Activated CD8-positive, alpha-beta memory T cell treated with anti-CD3 and anti-CD28 coated beads, Interleukin-2, amount 10 ng/mL, durations not matched to agents 7 days and 5 days (primary cell): ENCODE measurements at regions of chr19 and their contacts with region 1.

Region 1: GRCh38 chr19:50368649-50369570 is 3.5 kb upstream of the NAPSA start:
- DNase-seq: peak; percentile 90
- ATAC-seq: peak; percentile 82
- H3K4me3 Mint-ChIP-seq: peak overlapping the region; percentile 88
- H3K27ac Mint-ChIP-seq: peak overlapping the region; percentile 88
- H3K4me1 Mint-ChIP-seq: peaks cover 39% of the 10 kb centered on the region
- H3K27me3 Mint-ChIP-seq: no peaks in the 10 kb centered on the region

Region 2: DNA sequence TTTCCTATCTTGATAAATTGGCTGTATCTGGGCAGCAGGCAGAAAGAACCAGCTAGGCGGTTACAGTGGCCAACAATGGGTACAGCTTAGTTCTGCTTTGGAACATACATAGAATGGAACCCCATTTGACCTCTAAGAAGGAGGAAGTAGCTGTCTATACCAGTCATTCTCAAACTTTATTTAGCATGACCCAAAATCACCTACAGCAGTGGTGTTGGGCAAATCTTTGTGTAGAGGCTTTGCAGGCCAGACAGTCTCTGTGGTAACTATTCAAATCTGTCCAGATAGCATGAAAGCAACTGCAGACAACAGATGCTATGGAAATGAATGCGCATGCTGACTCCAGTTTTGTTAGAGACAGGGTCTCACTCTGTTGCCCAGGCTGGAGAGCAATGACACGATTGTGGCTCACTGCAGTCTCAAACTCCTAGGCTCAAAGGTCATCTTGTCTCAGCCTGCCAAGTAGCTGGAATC is 27.8 kb before region 1 on chr19:
- CTCF ChIA-PET with region 1: no interaction called
- DNase-seq: no peak
- ATAC-seq: peak; percentile 23
- H3K4me3 Mint-ChIP-seq: no peak overlapping the region
- H3K27ac Mint-ChIP-seq: no peak overlapping the region
- H3K4me1 Mint-ChIP-seq: peaks cover 14% of the 10 kb centered on the region
- H3K27me3 Mint-ChIP-seq: peaks cover 2% of the 10 kb centered on the region

Region 3: DNA sequence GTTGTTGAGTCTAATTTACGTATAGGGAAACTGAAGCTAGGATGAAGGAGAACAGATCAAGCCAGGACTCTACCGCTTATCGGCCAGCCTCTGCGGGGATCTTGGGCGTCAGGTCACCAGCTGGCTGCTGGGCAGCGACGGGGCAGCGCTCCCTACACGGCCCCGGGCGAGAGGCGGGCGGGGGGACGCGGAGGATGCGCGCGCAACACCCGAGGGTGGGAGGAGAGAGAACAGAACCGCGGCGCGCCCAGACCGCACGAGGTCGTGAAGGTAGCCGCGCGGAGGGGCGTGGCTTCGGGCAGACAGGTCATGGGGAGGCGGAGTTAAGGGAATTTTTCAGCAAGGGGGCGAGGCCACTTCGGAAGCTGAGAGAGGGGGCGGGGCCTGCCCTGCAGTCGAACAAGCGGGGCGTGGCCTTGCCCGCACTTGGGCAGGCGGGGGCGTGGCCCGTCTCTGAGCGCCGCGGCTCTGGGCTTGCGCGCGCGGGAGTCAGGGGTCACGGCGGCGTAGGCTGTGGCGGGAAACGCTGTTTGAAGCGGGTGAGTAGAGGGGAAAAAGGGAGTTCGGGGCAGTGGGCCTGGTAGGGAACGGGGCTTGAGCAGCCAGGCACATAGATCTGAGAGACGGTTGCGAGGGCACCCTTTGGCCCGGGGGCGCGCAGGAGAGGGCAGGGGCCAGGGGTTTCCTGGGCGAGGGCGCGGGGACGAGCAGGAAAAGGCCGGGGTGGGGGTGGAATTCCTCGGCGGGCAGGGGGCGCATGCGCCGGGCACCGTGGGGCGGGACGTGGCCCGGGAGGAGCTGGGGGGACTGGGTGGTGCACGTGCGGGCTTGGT is 15.2 kb after region 1 on chr19 and contains the start of gene POLD1:
- CTCF ChIA-PET with region 1: interaction called, 14 read pairs
- DNase-seq: peak; percentile 99
- ATAC-seq: peak; percentile 89
- H3K4me3 Mint-ChIP-seq: peak within 1 kb of the TSS; percentile 98
- H3K27ac Mint-ChIP-seq: peak within 1 kb of the TSS; percentile 95
- H3K4me1 Mint-ChIP-seq: peaks cover 37% of the 10 kb centered on the region
- H3K27me3 Mint-ChIP-seq: no peaks in the 10 kb centered on the region
- total RNA-seq, gene POLD1: 158 to 215 TPM

Region 4: DNA sequence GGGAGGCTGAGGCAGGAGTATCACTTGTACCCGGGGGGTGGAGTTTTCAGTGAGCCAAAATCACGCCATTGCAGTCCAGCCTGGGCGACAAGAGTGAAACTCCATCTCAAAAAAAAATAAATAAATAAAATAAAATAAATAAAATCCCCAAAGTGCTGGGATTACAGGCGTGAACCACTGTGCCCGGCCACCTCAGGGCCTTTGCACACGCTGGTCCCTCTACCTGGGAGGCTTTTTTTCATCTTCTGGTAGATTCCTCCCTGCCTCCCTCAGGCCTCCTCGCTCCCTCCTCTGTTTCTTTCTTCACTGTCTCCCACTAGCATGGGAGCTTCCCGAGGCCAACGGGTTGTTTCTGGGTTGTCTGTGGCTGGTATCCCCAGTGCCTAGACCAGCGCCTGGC is 78.8 kb after region 1 on chr19:
- CTCF ChIA-PET with region 1: no interaction called
- DNase-seq: no peak
- ATAC-seq: no peak
- H3K4me3 Mint-ChIP-seq: no peak overlapping the region
- H3K27ac Mint-ChIP-seq: no peak overlapping the region
- H3K4me1 Mint-ChIP-seq: no peaks in the 10 kb centered on the region
- H3K27me3 Mint-ChIP-seq: peaks cover 5% of the 10 kb centered on the region

Region 5: GRCh38 chr19:50461066-50461875 is 92.4 kb after region 1 on chr19:
- CTCF ChIA-PET with region 1: interaction called, 24 read pairs
- DNase-seq: peak; percentile 78
- ATAC-seq: peak; percentile 85
- H3K4me3 Mint-ChIP-seq: no peak overlapping the region
- H3K27ac Mint-ChIP-seq: no peak overlapping the region
- H3K4me1 Mint-ChIP-seq: peaks cover 14% of the 10 kb centered on the region
- H3K27me3 Mint-ChIP-seq: peaks cover 3% of the 10 kb centered on the region

Region 6: DNA sequence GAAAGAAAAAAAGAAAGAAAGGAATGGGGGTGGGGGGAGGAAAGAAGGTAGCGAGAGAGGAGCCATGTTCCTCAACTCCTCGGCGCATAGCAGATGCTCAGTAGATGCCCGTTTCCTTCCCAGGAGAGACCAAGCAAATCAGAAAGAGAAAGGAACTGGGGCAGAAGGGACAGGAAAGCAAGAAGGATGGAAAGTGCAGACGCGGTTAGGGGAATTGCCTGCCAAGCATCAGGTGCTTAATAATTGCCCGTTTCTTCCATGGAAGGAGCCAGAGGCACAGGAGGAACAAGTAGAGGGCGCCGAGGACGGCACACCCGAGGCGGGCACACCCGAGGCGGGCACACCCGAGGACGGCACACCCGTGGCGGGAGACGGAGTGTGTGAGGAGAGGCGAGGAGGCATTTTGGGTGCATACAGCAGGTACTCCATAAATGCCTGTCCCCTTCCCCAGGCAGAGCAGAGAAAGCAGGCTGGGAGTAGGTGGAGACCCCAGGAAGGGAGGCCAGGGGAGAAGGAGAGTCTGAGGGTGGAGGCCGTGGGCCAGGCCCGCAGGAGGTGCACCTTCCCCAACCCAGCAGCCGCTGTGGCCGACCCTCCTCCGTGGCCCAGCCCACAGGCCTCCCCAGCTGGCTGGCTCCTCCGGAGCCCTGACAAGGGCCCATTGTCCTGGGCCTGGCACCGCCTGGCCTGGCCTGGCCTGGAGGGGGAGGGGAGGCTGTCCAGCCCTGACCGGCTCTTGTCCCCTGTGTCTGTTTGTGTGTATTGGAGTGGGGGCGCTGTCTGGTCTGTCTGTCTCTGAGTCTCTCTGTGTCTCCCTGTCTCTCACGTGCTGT is 127.5 kb after region 1 on chr19:
- CTCF ChIA-PET with region 1: no interaction called
- DNase-seq: no peak
- ATAC-seq: no peak
- H3K4me3 Mint-ChIP-seq: no peak overlapping the region
- H3K27ac Mint-ChIP-seq: no peak overlapping the region
- H3K4me1 Mint-ChIP-seq: peaks cover 9% of the 10 kb centered on the region
- H3K27me3 Mint-ChIP-seq: peaks cover 7% of the 10 kb centered on the region